ENCODE measurements at regions of chr6 and their contacts with region 1.

Region 1: GRCh38 chr6:129683601-129684322 is 26.2 kb downstream of the ARHGAP18 start:
- DNase-seq: peak; percentile 96
- ATAC-seq: peak; percentile 87
- H3K4me3 ChIP-seq: no peak overlapping the region; a peak in 1 of 6 replicates
- H3K27ac ChIP-seq: peak overlapping the region; percentile 70
- H3K4me1 ChIP-seq: peaks cover 97% of the 10 kb centered on the region
- H3K27me3 ChIP-seq: no peaks in the 10 kb centered on the region
- CTCF ChIP-seq: no peak
- EP300 ChIP-seq: peak in 1 of 2 experiments; percentile 67; a peak in 3 of 4 replicates
- POLR2A ChIP-seq: peak; percentile 31 to 58; a peak in 1 of 4 replicates
- RAD21 ChIP-seq: no peak

Region 2: DNA sequence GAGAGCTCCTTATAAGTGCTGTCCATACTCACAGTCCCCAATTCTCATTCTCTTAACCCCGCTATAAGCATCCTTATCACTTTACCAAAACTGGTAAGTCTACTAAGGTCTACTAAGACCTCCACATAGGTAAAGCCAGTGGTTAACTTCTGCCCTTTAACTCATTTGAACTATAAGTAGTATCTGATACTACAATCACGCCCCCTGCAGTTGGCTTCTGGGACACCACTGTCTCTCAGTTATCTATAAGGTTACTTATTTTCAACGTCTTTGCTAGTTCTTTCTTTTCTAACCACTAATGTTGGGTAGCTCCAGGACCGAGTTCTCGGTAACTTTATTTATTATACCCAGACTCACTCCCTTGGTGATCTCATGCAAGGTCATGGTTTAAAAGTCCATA is 116.4 kb before region 1 on chr6:
- CTCF ChIA-PET with region 1: no interaction called
- POLR2A ChIA-PET with region 1: no interaction called
- in situ Hi-C with region 1: no loop called
- intact Hi-C with region 1: no loop called
- DNase-seq: peak; percentile 23
- ATAC-seq: peak; percentile 45
- H3K4me3 ChIP-seq: no peak overlapping the region
- H3K27ac ChIP-seq: no peak overlapping the region
- H3K4me1 ChIP-seq: no peaks in the 10 kb centered on the region
- H3K27me3 ChIP-seq: no peaks in the 10 kb centered on the region
- CTCF ChIP-seq: peak; percentile 47
- EP300 ChIP-seq: no peak
- POLR2A ChIP-seq: 0 out of 4 replicates have a peak, but pooled peaks of 1 of the 2 experiments have one; percentile 1
- RAD21 ChIP-seq: 0 out of 2 replicates have a peak, but pooled peaks have one; percentile 11

Region 3: DNA sequence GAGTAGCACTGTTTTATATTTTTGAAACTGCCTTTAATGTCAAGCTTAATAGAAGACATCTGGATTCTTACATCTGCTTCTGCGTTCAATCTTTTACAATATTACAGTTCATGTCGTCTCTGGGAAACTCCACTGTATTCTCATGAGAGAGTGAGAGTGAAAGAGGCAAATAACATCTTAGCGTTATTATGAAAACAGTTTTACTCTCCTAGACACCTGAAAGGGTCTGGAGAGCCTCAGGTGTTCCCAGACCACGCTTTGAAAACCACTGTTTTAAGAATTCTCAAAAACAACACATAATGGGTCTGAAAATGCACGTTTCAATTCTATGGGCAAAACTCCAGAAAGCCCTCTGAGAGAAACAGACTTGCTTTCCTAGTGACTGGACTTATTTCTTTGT is 37.1 kb before region 1 on chr6:
- CTCF ChIA-PET with region 1: no interaction called
- POLR2A ChIA-PET with region 1: interaction called, 3 read pairs
- in situ Hi-C with region 1: no loop called
- intact Hi-C with region 1: loop called (anchors 5 kb)
- DNase-seq: no peak
- ATAC-seq: no peak
- H3K4me3 ChIP-seq: no peak overlapping the region
- H3K27ac ChIP-seq: peak overlapping the region; percentile 68
- H3K4me1 ChIP-seq: peaks cover 91% of the 10 kb centered on the region
- H3K27me3 ChIP-seq: no peaks in the 10 kb centered on the region
- CTCF ChIP-seq: no peak
- EP300 ChIP-seq: no peak
- POLR2A ChIP-seq: no peak
- RAD21 ChIP-seq: no peak

Region 4: GRCh38 chr6:129695373-129696027 is 11.7 kb after region 1 on chr6:
- CTCF ChIA-PET with region 1: no interaction called
- POLR2A ChIA-PET with region 1: interaction called, 18 read pairs
- in situ Hi-C with region 1: no loop called
- intact Hi-C with region 1: no loop called
- DNase-seq: peak; percentile 92
- ATAC-seq: peak; percentile 87
- H3K4me3 ChIP-seq: peak overlapping the region; percentile 30 to 57 (median 43); a peak in 5 of 6 replicates
- H3K27ac ChIP-seq: peak overlapping the region; percentile 89
- H3K4me1 ChIP-seq: peaks cover 100% of the 10 kb centered on the region
- H3K27me3 ChIP-seq: no peaks in the 10 kb centered on the region
- CTCF ChIP-seq: no peak
- EP300 ChIP-seq: peak; percentile 50 to 95; a peak in 2 of 4 replicates
- POLR2A ChIP-seq: no peak
- RAD21 ChIP-seq: 0 out of 2 replicates have a peak, but pooled peaks have one; percentile 20